ENCODE measurements at regions of chr11 and their contacts with region 1.

Region 1: GRCh38 chr11:2400069-2400760 is at the start of gene TSSC4:
- DNase-seq: peak; percentile 97

Region 2: DNA sequence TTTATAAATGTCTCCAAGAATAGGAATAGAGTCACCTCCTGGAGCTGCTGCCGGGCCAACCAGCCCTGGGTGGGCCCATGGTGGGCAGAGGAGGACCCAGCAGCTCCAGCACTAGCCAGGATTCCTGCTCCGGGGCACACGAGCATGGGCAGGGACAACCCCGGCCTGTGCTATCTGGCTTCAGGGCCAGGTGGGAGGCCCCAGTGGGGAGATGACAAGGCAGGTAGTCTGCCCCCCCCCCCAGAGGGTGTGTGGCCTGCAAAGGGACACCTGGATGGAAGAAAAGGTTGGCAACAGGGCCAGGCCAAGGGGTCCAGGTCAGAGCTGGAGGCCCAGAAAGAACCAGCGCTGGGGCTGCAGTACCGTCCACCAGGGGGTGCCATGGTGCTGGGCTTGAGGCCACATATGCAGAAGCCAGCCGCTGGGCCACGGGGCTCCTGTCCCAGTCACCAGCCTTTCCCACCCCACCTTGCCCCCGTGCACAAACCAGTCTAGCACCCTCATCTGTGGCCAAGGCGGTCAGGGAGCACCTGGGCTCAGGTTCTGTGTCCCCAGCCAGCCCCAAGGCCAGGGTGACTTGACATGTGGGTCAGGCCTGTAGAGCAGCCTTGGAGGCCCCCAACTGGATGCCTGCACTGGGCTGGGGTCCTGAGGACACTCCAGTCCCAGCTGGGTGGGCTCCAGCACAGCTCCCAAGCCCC is 94.9 kb before region 1 on chr11:
- CTCF ChIA-PET with region 1: interaction called, 9 read pairs
- POLR2A ChIA-PET with region 1: interaction called, 18 read pairs
- DNase-seq: peak; percentile 81

Region 3: DNA sequence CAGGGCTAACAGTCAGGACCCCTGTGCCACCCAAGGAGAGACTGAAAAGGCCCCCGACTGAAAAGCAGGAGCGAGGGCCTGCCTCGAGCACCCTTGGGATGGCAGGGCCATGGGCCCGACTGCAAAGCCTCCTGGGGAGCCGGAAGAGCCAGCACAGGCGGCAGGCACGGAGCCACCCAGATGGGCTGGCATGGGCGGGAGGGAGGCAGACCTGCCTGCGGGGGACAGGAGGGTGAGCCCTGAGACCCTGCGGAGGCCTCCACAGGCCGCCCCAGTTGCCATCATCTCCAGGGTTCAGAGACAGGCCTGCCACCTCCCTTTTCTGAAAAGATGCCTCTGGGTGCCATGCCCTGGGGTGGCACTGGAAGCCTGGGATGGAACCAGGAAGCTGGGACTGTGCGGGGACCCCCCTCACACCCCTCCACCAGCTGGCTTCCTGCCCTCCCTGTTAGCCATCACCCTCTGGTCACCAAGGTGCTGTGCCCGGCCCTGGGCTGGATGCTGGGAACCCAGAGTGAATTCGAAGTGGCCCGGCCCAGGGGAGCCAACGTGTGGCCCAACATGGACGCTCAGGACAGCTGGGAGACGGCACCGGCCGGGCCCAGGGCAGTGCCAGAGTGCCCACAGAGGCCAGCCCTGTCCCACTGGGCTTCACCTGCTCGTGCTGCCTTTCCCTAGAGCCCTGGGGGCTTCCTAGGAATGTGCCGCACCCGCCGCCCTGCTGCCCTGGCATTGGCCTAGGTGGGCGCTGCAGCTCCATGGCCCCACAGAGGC is 84.6 kb before region 1 on chr11:
- CTCF ChIA-PET with region 1: no interaction called
- POLR2A ChIA-PET with region 1: no interaction called
- DNase-seq: no peak

Region 4: DNA sequence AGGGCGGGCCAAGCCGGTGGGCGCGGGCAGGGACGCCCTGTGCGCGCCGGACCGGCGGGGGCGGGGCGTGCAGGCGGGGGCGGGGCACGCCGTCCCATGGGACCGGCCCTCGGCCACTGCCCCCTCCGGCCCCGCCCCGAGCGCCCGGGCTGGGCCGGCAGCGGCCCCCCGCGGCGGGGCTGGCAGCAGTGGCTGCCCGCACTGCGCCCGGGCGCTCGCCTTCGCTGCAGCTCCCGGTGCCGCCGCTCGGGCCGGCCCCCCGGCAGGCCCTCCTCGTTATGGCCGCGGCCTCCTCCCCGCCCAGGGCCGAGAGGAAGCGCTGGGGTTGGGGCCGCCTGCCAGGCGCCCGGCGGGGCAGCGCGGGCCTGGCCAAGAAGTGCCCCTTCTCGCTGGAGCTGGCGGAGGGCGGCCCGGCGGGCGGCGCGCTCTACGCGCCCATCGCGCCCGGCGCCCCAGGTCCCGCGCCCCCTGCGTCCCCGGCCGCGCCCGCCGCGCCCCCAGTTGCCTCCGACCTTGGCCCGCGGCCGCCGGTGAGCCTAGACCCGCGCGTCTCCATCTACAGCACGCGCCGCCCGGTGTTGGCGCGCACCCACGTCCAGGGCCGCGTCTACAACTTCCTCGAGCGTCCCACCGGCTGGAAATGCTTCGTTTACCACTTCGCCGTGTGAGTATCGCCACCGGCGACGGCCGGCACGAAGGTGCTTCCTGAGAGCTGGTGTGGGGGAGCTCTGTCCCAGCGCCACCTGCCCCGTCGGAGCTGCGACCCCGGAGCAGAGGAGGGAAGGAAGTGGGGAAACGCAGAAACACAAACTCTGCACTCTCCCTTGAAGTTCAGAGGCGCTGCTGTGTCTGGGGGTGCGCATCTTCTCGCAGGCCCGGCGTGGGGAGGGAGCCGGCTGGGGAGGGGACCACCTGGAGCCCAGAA is 44.9 kb after region 1 on chr11 and contains the start of gene KCNQ1:
- CTCF ChIA-PET with region 1: no interaction called
- POLR2A ChIA-PET with region 1: no interaction called
- DNase-seq: peak; percentile 83

Region 5: DNA sequence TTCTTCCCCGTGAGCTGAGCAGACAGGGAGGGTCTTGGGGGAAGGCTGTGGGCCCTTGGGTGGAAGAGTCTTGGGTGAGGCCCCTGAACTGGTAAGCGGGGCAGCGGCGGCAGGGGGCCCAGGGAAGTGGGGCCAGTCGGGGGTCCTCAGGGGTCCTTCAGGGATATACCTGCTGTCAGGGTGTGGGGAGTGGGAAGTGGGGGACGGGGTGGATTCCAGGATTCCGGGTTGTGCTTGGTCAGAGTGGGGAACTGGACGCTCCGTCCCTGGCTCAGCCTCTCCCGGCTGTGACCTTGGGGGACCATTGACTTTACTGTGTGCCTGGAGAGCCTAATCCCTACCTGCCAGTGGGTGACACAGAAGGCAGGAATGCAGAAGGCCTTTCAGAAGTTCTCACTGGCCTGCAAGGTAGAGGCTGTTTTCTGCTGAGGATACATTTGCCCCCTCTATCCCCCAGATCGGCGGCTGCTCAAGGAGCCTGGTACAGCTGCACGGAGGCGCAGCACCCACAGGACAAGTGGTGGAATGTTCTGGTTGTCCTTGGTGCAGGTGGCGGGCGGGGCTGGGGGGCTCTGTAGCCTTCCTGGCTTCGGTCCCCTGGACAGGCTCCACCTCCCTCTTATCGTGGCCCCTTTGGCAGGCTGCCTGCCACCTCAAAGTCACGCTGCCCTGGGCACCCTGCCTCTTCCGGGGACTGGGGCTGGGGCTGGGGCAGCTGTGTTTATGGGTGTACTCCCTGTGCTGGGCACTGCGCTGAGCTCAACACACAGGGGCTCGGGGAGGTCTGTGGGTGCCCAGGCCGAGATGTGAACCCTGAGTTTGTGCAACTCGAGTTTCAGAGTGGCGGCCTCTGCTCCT is 62.9 kb after region 1 on chr11:
- CTCF ChIA-PET with region 1: no interaction called
- POLR2A ChIA-PET with region 1: no interaction called
- DNase-seq: no peak

Measured in HEK293T (cell line).